Gastrocnemius medialis (tissue), 4 donors: ENCODE measurements at regions of chr4 and their contacts with region 1.

Region 1: DNA sequence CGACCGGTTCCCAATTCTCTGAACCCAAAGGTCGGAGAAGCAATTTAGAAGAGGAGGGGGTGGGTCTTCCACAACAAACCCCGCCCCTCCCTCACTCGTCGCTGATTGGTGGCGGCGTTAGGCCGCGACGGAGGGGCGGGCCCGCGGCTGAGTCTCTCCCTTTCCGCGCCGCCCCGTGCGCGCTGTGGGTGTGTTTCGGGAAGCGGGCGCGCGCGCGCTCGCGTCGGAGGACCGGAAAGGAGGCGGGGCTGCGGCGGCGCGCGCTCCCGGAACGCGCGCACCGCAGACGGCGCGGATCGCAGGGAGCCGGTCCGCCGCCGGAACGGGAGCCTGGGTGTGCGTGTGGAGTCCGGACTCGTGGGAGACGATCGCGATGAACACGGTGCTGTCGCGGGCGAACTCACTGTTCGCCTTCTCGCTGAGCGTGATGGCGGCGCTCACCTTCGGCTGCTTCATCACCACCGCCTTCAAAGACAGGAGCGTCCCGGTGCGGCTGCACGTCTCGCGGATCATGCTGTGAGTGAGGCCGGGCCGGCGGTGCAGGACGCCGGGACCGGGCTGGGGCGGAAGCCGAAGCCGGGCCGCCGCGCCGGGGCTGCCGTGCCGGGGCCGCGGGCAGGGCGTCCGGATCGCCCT is at the start of gene SPCS3:
- DNase-seq: peak; percentile 92 to 94
- ATAC-seq: peak; percentile 90 to 94
- H3K4me3 ChIP-seq: peak within 1 kb of the TSS; percentile 74 to 87 (median 80)
- H3K27ac ChIP-seq: peak within 1 kb of the TSS; percentile 89 to 96 (median 90)
- H3K4me1 ChIP-seq: peaks cover 24 to 31% of the 10 kb centered on the region in 2 donors
- H3K27me3 ChIP-seq: no peaks in the 10 kb centered on the region
- CTCF ChIP-seq: no peak
- POLR2A ChIP-seq: peak; percentile 91 to 95
- total RNA-seq, gene SPCS3: 25.7 to 37.7 (median 34.7) TPM

Region 2: DNA sequence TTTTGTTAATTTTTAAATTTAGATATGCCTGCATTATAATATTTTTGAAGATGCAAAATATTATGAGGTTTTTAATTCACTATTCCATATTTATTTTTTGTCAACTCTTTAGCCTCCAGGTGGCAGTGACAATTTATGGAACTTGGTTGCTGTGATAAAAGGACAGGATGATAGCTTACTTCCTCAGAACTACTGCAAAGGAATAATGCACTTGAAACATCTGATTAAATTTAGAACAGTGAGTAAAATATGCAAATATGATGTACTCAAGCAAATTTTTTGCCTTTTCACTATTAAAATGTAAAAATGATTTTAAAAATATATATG is 169.5 kb before region 1 on chr4:
- in situ Hi-C with region 1: loop called in 1 of 4 experiments (anchors 25 kb)
- intact Hi-C with region 1: loop called (anchors 5 kb)
- DNase-seq: no peak
- ATAC-seq: peak; percentile 74 to 88
- H3K4me3 ChIP-seq: no peak overlapping the region
- H3K27ac ChIP-seq: peak overlapping the region in 3 of 4 donors; percentile 14 to 55 (median 42)
- H3K4me1 ChIP-seq: peaks cover 0 to 2% of the 10 kb centered on the region in 2 donors
- H3K27me3 ChIP-seq: no peaks in the 10 kb centered on the region
- CTCF ChIP-seq: peak; percentile 43 to 60 (median 54)
- POLR2A ChIP-seq: no peak

Region 3: DNA sequence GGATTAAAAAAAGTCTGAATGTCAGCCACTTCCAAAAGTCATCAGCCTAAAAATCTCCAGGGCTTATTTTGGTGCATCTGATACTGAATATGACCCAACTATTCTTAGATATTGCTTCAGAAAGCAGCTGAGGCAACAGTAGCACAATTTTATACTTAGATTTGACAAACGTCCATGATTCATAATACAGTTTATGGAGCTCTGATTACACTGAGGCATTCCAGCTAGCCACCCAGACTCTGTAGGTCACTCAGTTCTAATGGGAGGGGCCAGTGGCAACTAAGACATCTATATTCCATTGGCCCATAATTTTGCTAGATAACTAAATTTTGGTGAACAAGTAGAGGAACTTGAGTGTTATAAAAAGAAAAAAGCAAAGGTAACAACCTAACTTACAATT is 134.8 kb before region 1 on chr4:
- in situ Hi-C with region 1: no loop called
- intact Hi-C with region 1: loop called (anchors 1 kb)
- DNase-seq: peak; percentile 45 to 66
- ATAC-seq: peak; percentile 94 to 97
- H3K4me3 ChIP-seq: no peak overlapping the region
- H3K27ac ChIP-seq: peak overlapping the region; percentile 82 to 91 (median 86)
- H3K4me1 ChIP-seq: peaks cover 58 to 59% of the 10 kb centered on the region in 2 donors
- H3K27me3 ChIP-seq: no peaks in the 10 kb centered on the region
- CTCF ChIP-seq: no peak
- POLR2A ChIP-seq: no peak

Region 4: GRCh38 chr4:176195184-176195978 is 124.4 kb before region 1 on chr4 and contains the start of gene SPATA4:
- in situ Hi-C with region 1: no loop called
- intact Hi-C with region 1: loop called (anchors 5 kb)
- DNase-seq: peak; percentile 92 to 93
- ATAC-seq: peak; percentile 89 to 92
- H3K4me3 ChIP-seq: peak within 1 kb of the TSS; percentile 68 to 74 (median 69)
- H3K27ac ChIP-seq: peak within 1 kb of the TSS; percentile 82 to 93 (median 90)
- H3K4me1 ChIP-seq: peaks cover 21 to 27% of the 10 kb centered on the region in 2 donors
- H3K27me3 ChIP-seq: no peaks in the 10 kb centered on the region
- CTCF ChIP-seq: no peak
- POLR2A ChIP-seq: peak; percentile 71 to 72
- total RNA-seq, gene SPATA4: 0.22 to 0.29 TPM in 2 of 4 donors, not detected in the others

Region 5: GRCh38 chr4:176230836-176231235 is 89.0 kb before region 1 on chr4:
- in situ Hi-C with region 1: no loop called
- intact Hi-C with region 1: loop called (anchors 2 kb)
- DNase-seq: no peak
- ATAC-seq: peak; percentile 76 to 78
- H3K4me3 ChIP-seq: peak overlapping the region; percentile 17 to 37 (median 32)
- H3K27ac ChIP-seq: peak overlapping the region; percentile 82 to 91 (median 86)
- H3K4me1 ChIP-seq: peaks cover 33 to 79% of the 10 kb centered on the region in 2 donors
- H3K27me3 ChIP-seq: no peaks in the 10 kb centered on the region
- CTCF ChIP-seq: no peak
- POLR2A ChIP-seq: peak; percentile 7 to 29

Region 6: DNA sequence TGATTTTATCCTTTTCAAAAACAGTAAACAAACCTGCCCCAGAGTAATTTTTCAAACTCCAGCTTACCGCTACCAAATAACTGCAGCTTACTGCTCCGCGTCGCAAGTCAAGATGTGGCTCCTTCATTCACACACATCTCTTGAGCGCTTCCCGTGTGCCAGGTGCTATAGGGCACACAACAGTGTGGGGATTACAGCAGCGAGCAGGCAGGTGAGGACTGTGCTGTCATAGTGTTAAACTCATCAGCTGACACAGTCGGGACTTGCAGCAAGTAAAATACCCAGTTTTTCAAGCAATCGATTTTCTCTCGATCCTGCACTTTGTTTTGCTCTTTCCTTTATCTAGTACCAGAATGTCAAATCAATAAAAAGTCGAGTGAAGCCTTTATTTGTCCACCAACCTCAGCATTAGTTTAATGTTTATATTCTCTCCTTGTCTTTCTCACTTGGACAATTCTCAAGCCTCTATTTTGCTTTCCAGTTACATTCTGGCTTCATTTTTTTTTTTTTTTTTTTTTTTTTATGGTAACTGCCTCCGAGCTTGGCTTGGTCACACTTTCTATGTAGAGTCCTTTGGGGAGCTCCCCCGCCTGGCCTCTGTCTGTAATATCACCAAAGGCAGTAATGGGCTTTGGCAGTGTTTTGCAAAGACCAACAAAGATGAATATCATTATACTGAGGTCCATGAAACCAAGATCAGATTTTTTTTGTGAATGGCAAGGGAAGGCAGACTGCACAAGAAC is 42.5 kb before region 1 on chr4:
- in situ Hi-C with region 1: no loop called
- intact Hi-C with region 1: loop called (anchors 2 kb)
- DNase-seq: peak; percentile 38 to 73
- ATAC-seq: peak; percentile 64 to 69
- H3K4me3 ChIP-seq: peak overlapping the region; percentile 27 to 36 (median 28)
- H3K27ac ChIP-seq: peak overlapping the region; percentile 88 to 98 (median 94)
- H3K4me1 ChIP-seq: peaks cover 0 to 43% of the 10 kb centered on the region in 2 donors
- H3K27me3 ChIP-seq: no peaks in the 10 kb centered on the region
- CTCF ChIP-seq: peak; percentile 39 to 64 (median 46)
- POLR2A ChIP-seq: no peak

Region 7: DNA sequence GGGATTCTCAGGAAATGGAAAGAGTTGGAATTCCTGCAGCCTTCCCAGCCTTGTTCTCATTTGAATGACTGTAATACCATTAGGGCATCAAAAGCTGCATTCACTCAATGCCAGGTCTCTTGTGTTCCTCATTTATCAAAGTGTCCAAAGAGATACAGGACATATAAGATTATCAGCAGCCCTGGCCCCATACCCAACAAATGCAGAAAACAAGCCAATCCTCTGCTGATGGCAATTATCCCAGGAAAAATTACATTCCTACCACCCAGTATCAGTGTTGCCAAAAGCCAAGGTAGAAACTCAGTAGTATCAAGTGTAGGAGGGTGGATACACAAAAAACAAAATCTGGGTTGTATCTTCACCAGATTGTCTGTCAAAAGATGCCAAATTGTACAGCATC is 32.3 kb before region 1 on chr4:
- in situ Hi-C with region 1: no loop called
- intact Hi-C with region 1: no loop called
- DNase-seq: no peak
- ATAC-seq: no peak
- H3K4me3 ChIP-seq: no peak overlapping the region
- H3K27ac ChIP-seq: no peak overlapping the region
- H3K4me1 ChIP-seq: no peaks in the 10 kb centered on the region
- H3K27me3 ChIP-seq: no peaks in the 10 kb centered on the region
- CTCF ChIP-seq: no peak
- POLR2A ChIP-seq: no peak

Region 8: GRCh38 chr4:177441803-177442622 is 1122.2 kb after region 1 on chr4 and contains the start of gene AGA:
- in situ Hi-C with region 1: no loop called
- intact Hi-C with region 1: loop called (anchors 5 kb)
- DNase-seq: peak; percentile 92 to 94
- ATAC-seq: peak; percentile 91 to 94
- H3K4me3 ChIP-seq: peak within 1 kb of the TSS; percentile 67 to 82 (median 69)
- H3K27ac ChIP-seq: peak within 1 kb of the TSS; percentile 77 to 93 (median 90)
- H3K4me1 ChIP-seq: peaks cover 15 to 16% of the 10 kb centered on the region in 2 donors
- H3K27me3 ChIP-seq: no peaks in the 10 kb centered on the region
- CTCF ChIP-seq: no peak
- POLR2A ChIP-seq: peak; percentile 37 to 64
- total RNA-seq, gene AGA: 9.0 to 11.1 (median 10.0) TPM